Head of caudate nucleus (tissue), 42 donors: ENCODE measurements at regions of chr14 and their contacts with region 1.

Region 1: DNA sequence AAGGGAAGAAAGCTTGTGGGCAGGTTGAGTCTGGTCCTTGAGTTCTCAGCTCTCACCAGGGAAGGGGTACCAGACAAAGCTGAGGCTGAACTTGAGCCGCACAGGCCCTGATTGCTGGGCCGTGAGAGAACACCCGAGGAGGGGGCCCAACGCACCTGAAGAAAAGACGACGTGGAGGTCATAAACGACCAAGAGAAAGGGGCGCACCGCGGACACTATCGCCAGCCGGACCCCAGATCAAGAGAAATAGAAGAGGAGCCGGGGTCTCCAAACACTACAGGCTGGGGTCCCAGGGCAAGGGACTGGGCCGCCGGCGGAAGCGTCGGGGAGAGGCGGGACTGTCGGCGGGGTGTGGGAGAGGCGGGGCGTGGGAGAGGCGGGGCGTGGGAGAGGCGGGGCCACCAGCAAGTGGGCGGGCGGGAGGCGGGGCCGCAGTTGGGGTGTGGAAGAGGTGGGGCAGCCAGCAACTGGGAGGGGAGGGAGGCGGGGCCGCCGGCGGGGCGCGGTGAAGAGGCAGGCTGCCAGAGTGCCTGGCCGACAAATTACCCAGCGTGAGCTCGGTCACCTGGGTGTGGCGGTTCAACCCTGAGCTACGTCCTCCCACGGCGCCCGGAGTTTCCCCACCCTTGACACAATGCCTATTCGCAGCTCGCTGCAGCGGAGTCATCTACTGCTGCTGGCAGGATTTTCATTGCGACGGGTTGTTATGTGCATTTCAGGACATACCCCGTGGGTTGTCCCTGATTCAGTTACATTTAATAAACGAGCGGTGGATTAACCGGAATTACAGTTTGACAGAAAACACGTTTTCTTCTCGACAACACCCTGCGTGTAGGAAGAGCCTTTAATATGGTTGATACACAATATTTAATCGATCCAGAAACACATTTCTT is 15.5 kb upstream of the NEMF start:
- DNase-seq: peak; percentile 84 to 99 (median 95)

Region 2: GRCh38 chr14:49892636-49893308 is 24.7 kb after region 1 on chr14 and contains the start of gene ARF6:
- intact Hi-C with region 1: no loop called
- DNase-seq: peak; percentile 93 to 99 (median 98)

Region 3: DNA sequence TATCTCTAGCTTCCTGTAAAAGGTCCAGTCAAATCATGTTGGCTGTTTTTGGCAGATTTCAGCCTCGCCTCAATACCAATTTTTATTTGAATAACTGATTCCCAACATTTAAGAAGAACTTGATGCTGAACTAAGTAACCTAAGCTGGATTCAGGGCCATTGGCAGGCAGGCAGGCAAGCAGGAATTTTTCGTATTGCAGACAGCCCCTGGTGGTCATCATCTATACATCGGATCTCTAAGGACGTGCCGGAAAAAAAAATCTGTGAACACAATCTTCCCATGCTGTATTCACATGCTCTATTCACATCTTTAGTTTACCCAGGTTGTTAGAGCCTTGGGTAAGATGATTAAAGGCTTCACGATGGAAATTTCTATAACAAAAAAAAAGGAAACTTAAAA is 241.3 kb after region 1 on chr14:
- intact Hi-C with region 1: loop called (anchors 5 kb)
- DNase-seq: no peak

Region 4: GRCh38 chr14:50231475-50232275 is 363.6 kb after region 1 on chr14 and contains the start of gene SOS2:
- intact Hi-C with region 1: loop called (anchors 10 kb)
- DNase-seq: peak; percentile 68 to 94 (median 88)